Common myeloid progenitor, CD34-positive (primary cell): ENCODE measurements at regions of chr12 and their contacts with region 1.

Region 1: DNA sequence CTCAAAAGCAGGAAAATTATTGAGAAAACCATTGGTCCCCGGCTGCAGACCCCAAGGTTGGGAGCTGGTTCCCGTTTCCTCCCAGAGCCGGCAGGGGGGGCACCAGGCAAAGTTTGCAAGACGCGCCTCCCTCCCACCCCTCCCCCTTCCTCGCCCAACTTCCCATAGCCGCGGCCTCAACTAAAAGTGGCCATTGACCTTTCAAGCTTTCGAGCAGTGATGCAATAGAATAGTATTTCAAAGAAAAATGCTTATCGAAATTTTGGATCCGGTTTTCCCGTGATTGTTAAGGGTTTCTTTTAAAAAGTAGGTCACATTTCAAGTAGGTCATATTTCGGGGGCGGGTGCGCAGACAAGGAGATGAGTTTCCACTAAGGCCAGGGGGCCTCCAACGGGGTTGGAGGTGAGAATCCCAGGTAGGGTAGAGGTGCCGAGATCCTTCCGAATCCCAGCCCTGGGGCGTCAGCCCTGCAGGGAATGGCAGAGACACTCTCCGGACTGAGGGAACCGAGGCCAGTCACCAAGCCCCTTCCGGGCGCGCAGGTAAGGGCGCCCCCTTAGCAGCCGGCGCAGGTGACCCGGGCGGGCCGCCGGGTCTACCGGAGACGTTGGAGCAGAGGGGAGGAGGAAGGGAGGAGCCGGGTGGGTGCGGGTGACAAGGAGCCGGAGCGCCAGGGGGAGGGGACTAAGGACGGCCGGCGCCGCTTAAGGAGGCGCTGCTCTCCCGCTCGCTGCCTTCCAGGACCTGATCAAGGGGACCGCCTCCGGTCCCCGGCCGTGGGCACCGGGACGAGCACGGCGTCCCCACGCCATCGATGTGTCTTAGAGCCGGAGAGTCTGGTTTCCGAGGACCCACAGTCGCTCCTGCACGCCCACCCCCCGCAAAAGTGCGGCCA is 2.6 kb upstream of the SOCS2 start:
- DNase-seq: peak; percentile 86 to 88 (median 87)
- H3K4me3 ChIP-seq: peak overlapping the region; percentile 79 to 96 (median 87)
- H3K27ac ChIP-seq: peak overlapping the region; percentile 58 to 85
- H3K4me1 ChIP-seq: peaks cover 3 to 39% (median 25%) of the 10 kb centered on the region in 4 experiments
- H3K27me3 ChIP-seq: no peaks in the 10 kb centered on the region

Region 2: DNA sequence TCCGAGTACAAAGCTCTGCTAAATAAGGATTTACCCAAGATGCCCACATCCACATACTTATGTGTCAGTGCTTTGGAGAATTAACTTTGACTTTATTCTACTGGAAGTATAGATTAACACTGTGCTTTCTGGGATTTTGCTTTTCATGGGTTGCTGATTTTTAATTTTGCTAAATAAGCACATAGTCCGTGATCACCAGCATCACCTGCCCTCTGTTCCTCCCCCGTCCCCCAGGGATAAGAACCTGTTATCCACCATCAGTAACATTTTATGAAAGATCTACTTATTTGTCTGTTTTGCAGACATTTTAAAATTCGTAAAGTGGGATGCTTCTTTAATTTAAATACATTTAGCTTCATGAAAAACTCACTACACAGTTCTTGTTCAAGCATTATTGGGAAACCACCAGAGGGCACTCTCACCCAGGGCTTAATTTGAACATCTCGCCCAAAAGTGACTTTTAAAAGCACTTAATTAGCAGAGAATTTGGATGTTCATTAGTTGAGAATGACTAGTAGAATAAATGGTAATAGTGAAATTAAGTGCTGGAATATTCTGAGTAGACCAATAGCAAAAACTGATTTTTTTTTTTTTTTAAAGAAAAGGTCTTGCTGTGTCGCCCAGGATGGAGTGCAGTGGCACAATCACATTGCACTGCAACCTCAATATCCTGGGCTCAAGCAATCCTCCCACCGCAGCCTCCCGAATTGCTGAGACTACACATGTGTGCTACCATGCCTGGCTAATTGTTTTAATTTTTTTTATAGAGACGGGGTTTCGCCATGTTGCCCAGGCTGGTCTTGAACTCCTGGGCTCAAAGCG is 66.9 kb before region 1 on chr12:
- CTCF ChIA-PET with region 1: interaction called, 34 read pairs
- POLR2A ChIA-PET with region 1: no interaction called
- DNase-seq: peak; percentile 69 to 85 (median 77)
- H3K4me3 ChIP-seq: no peak overlapping the region
- H3K27ac ChIP-seq: no peak overlapping the region
- H3K4me1 ChIP-seq: no peaks in the 10 kb centered on the region
- H3K27me3 ChIP-seq: no peaks in the 10 kb centered on the region

Region 3: GRCh38 chr12:93536111-93536765 is 33.7 kb before region 1 on chr12:
- CTCF ChIA-PET with region 1: no interaction called
- POLR2A ChIA-PET with region 1: no interaction called
- DNase-seq: no peak
- H3K4me3 ChIP-seq: no peak overlapping the region
- H3K27ac ChIP-seq: no peak overlapping the region
- H3K4me1 ChIP-seq: peaks cover 11 to 26% (median 21%) of the 10 kb centered on the region in 4 experiments
- H3K27me3 ChIP-seq: no peaks in the 10 kb centered on the region

Region 4: DNA sequence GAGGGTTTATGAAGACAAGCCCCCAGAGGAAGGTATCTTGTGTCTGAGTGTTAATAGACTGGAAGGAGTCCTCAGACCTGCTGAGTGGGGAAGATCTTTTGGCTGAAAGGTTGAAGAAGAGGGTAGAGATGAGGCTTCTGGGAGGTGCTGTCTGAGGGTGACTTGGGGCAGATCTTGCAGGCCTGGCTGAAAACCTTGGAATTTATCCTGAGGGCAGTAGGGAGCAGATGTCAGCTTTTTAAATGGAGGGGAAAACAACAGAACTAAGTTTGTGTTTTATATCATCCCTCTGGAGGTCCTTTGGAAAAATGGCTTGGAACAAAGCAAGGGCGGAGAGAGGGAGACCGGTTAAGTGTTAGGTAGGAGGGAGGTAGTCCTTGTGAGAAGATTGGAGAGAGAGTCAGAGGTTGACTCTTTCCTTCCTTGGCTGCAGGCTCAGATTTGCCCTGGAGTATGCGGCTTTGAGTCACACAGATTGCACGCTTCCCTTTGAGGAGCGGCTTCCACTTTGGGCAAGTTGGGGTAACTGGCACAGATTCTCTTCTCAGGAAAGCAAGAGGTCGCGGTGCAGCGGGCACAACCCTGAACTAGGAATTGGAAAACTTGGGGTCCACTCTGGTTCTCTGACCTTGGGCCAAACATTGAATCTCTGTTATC is 12.3 kb after region 1 on chr12:
- CTCF ChIA-PET with region 1: interaction called, 114 read pairs
- POLR2A ChIA-PET with region 1: no interaction called
- DNase-seq: no peak
- H3K4me3 ChIP-seq: no peak overlapping the region
- H3K27ac ChIP-seq: no peak overlapping the region
- H3K4me1 ChIP-seq: peaks cover 5 to 38% (median 18%) of the 10 kb centered on the region in 4 experiments
- H3K27me3 ChIP-seq: no peaks in the 10 kb centered on the region

Region 5: GRCh38 chr12:93612776-93613175 is 42.9 kb after region 1 on chr12:
- CTCF ChIA-PET with region 1: no interaction called
- POLR2A ChIA-PET with region 1: no interaction called
- DNase-seq: no peak
- H3K4me3 ChIP-seq: no peak overlapping the region
- H3K27ac ChIP-seq: no peak overlapping the region
- H3K4me1 ChIP-seq: peaks cover 0 to 6% (median 3%) of the 10 kb centered on the region in 4 experiments
- H3K27me3 ChIP-seq: no peaks in the 10 kb centered on the region

Region 6: DNA sequence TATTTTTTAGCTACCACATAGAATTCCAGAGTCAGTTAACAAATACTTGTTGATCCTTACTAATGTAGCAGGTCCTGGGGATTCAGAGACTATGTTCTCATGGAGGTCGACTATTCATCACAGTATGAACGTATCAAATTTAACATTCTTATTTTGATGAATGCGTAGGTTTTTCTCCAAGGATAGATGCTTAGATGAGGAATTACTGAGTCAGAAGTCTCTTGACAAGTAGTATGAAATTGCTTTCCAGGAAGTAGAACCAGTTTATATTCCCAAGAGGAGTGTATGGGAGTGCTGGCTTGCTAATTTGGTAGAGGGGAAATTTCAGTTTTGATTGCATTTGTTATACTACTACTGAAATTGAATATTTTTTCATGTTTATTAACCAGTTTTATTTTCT is 64.5 kb after region 1 on chr12:
- CTCF ChIA-PET with region 1: no interaction called
- POLR2A ChIA-PET with region 1: no interaction called
- DNase-seq: no peak
- H3K4me3 ChIP-seq: no peak overlapping the region
- H3K27ac ChIP-seq: no peak overlapping the region
- H3K4me1 ChIP-seq: no peaks in the 10 kb centered on the region
- H3K27me3 ChIP-seq: no peaks in the 10 kb centered on the region

Region 7: GRCh38 chr12:93742110-93742934 is 172.4 kb after region 1 on chr12:
- CTCF ChIA-PET with region 1: interaction called, 37 read pairs
- POLR2A ChIA-PET with region 1: interaction called, 13 read pairs
- DNase-seq: peak; percentile 81 to 86 (median 83)
- H3K4me3 ChIP-seq: peak overlapping the region; percentile 44 to 98 (median 83)
- H3K27ac ChIP-seq: peak overlapping the region; percentile 87 to 92
- H3K4me1 ChIP-seq: peaks cover 16 to 68% (median 45%) of the 10 kb centered on the region in 4 experiments
- H3K27me3 ChIP-seq: no peaks in the 10 kb centered on the region

Region 8: DNA sequence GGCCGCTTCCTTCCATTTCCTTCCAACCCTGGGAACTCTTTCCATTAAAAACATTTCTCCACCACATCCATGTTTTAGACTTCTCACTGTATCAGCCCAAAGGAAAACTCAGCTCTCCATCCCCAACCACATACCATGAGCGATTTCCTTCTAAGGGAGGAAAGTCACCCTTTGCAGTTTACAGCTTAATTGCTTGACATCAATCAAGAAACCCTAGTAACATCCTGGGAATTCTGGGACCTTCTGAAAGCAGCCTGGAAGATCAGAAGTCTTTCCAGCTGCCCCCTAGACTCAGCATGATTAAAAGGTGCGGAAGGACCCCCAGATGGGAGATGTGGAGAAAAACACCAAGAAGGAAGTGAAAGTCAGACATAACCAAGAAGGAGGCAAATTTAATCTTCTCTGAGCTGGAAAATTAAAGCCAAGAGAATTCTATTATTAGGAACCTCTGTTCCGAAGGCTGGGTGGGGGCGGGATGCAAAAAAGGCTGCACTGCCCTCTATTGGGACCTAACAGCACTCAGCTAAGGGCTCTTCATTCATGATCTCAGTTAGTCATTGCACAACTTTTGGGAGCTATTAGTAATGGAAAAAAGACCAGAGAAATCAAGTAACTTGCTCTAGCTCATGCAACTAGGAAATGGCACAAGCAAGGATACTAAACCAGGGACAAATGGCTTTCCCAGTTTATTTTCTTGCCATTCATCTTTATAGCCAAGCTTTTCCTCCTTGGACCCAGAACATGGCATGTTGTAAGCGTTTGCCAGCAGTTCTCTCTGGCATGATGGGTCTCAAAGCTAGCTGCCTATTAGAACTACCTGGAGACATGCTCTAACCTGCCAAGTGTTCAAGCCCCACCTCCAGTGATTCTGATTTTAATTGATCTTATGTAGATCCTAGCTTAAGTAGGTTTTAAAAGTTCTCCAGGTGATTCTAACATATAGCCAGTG is 505.4 kb after region 1 on chr12:
- CTCF ChIA-PET with region 1: interaction called, 12 read pairs
- POLR2A ChIA-PET with region 1: no interaction called
- DNase-seq: peak; percentile 47 to 56 (median 54)
- H3K4me3 ChIP-seq: no peak overlapping the region
- H3K27ac ChIP-seq: no peak overlapping the region
- H3K4me1 ChIP-seq: peaks cover 2 to 45% (median 22%) of the 10 kb centered on the region in 4 experiments
- H3K27me3 ChIP-seq: no peaks in the 10 kb centered on the region